Right ventricle myocardium inferior (tissue), 1 donor: ENCODE measurements at regions of chr7 and their contacts with region 1.

Region 1: GRCh38 chr7:116876664-116877442 is 14.5 kb downstream of the CAPZA2 start:
- DNase-seq: peak; percentile 66
- ATAC-seq: peak; percentile 74

Region 2: GRCh38 chr7:115693779-115694178 is 1183.1 kb before region 1 on chr7:
- intact Hi-C with region 1: no loop called
- DNase-seq: no peak
- ATAC-seq: no peak

Region 3: DNA sequence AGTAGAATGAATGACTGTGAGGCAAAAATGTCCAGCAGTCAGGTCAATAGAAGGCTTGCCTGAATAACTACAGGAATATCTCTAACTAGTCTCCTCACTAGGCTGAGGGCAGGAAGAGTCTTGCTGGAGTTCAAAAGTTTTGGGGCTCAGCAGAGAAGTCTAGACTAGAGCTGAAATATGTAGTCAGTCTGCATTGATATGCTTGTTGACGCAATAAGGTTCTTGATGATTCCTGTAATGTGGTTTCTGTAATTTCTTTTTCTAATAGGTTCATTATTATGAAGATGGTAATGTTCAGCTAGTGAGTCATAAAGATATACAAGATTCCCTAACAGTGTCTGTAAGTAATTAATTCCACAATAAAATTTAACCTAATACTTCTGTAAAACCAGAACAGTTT is 34.9 kb after region 1 on chr7:
- intact Hi-C with region 1: loop called (anchors 5 kb)
- DNase-seq: no peak
- ATAC-seq: no peak